ENCODE measurements at regions of chr21 and their contacts with region 1.

Region 1: DNA sequence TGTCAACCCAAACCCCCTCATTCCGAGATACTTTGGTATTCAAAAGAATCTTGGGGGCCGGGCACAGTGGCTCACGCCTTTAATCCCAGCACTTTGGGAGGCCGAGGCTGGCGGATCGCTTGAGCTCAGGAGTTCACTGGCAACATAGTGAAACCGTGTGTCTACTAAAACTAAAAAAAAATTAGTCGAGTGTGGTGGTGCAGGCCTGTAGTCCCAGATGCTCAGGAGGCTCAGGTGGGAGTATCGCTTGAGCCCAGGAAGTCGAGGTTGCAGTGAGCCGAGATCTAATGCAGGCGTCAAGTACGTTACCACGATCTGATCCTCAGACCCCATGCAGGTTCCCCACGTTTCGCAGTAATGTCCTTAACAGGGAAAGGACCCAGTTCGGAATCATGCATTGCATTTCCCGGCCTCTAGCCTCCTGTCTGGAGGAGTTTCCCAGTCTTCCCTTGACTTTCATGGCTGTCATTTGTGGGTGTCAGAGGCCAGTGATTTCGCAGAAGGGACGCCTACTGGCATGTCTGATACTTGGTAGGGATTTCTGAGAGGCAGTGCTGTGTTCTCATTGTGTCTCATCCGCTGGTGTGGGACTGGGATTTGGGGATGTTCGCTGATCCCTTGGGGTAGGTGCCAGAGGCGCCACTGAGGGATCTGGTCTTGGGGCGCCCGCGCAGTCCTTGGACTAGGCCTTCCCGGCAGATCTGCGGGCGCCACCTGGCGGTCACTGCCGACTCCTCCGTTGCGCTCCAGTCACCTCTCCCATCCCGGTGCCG is 39.3 kb upstream of the HMGN1 start:
- DNase-seq: peak; percentile 84
- ATAC-seq: peak; percentile 82
- H3K4me3 Mint-ChIP-seq: peak overlapping the region; percentile 82
- H3K27ac Mint-ChIP-seq: peak overlapping the region; percentile 75
- H3K4me1 Mint-ChIP-seq: peaks cover 26% of the 10 kb centered on the region
- H3K27me3 Mint-ChIP-seq: no peaks in the 10 kb centered on the region
- CTCF ChIP-seq: peak; percentile 88

Region 2: DNA sequence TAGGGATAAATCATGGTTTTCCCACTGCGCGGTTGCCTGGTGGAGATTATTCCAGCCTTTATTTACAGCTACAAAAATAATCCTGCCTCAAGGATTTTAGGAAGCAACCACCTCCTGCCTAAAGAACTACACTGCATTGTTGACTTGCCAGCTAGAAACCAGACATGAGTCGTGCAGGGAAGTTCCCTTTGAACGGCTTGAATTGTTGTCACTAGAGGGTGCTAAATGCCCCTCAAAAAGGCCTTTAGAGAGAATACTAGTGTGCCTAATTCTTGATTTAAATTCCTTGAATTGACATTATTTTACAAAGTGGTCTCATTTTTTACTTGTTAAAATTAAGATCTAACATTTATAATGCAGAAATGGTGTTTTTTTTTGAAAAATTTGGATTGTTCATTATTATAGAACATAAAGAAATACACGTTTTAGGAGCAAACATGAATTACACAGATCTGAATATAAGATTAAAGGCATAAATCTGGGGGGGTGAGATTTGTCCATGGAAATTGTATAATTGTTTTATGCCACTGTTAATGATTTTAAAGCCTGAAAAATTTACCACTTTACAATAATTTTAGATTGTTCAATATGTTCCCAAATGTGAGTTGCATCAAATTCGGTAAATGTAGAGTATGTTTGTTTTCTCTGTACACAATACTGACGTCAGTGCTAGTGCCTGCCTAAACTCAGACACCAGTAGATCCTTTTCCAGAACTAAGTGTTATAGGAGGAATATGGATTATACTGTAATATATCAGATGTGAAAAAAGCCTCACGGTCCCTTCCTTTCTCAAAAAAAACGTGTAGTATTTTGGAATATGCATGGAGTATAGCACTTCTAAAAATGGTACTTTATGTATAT is 882.3 kb before region 1 on chr21:
- CTCF ChIA-PET with region 1: no interaction called
- POLR2A ChIA-PET with region 1: no interaction called
- intact Hi-C with region 1: loop called (anchors 5 kb)
- DNase-seq: no peak
- ATAC-seq: no peak
- H3K4me3 Mint-ChIP-seq: no peak overlapping the region
- H3K27ac Mint-ChIP-seq: no peak overlapping the region
- H3K4me1 Mint-ChIP-seq: no peaks in the 10 kb centered on the region
- H3K27me3 Mint-ChIP-seq: peaks cover 14% of the 10 kb centered on the region
- CTCF ChIP-seq: no peak

Region 3: GRCh38 chr21:39183237-39184007 is 204.8 kb before region 1 on chr21 and contains the start of gene PSMG1:
- CTCF ChIA-PET with region 1: no interaction called
- POLR2A ChIA-PET with region 1: interaction called, 10 read pairs
- intact Hi-C with region 1: loop called (anchors 1 kb)
- DNase-seq: peak; percentile 97
- ATAC-seq: peak; percentile 91
- H3K4me3 Mint-ChIP-seq: peak within 1 kb of the TSS; percentile 98
- H3K27ac Mint-ChIP-seq: peak within 1 kb of the TSS; percentile 94
- H3K4me1 Mint-ChIP-seq: peaks cover 20% of the 10 kb centered on the region
- H3K27me3 Mint-ChIP-seq: no peaks in the 10 kb centered on the region
- CTCF ChIP-seq: no peak
- total RNA-seq, gene PSMG1: 23.7 and 28.4 TPM in 2 replicates

Region 4: GRCh38 chr21:39313571-39314142 is 74.6 kb before region 1 on chr21 and contains the start of gene BRWD1:
- CTCF ChIA-PET with region 1: interaction called, 5 read pairs
- POLR2A ChIA-PET with region 1: interaction called, 19 read pairs
- intact Hi-C with region 1: loop called (anchors 1 kb)
- DNase-seq: peak; percentile 86
- ATAC-seq: peak; percentile 49
- H3K4me3 Mint-ChIP-seq: peak within 1 kb of the TSS; percentile 94
- H3K27ac Mint-ChIP-seq: peak within 1 kb of the TSS; percentile 92
- H3K4me1 Mint-ChIP-seq: peaks cover 47% of the 10 kb centered on the region
- H3K27me3 Mint-ChIP-seq: no peaks in the 10 kb centered on the region
- CTCF ChIP-seq: no peak
- total RNA-seq, gene BRWD1: 36.9 and 40.3 TPM in 2 replicates

Region 5: GRCh38 chr21:39373644-39374043 is 14.6 kb before region 1 on chr21:
- CTCF ChIA-PET with region 1: interaction called, 11 read pairs
- POLR2A ChIA-PET with region 1: interaction called, 3 read pairs
- intact Hi-C with region 1: loop called (anchors 1 kb)
- DNase-seq: no peak
- ATAC-seq: peak; percentile 49
- H3K4me3 Mint-ChIP-seq: no peak overlapping the region
- H3K27ac Mint-ChIP-seq: no peak overlapping the region
- H3K4me1 Mint-ChIP-seq: peaks cover 5% of the 10 kb centered on the region
- H3K27me3 Mint-ChIP-seq: no peaks in the 10 kb centered on the region
- CTCF ChIP-seq: no peak

Region 6: DNA sequence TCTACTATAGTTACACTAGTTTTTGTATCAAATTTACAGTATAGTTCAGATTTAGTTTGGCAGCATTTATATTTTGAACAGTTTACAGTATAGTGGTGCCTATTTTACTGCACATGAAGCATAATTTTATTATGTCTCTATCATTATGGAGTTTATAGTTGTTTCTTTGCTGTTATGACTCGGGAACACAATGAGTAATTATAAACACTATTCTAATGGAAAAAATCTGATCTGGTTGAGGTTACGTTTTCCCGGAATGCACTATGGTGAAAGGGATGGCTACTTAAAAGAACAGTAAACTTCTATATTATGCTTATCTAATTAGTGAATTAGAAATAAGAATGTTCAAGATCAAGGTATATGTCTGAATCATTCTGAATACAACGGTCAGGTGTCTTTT is 46.7 kb after region 1 on chr21:
- CTCF ChIA-PET with region 1: no interaction called
- POLR2A ChIA-PET with region 1: no interaction called
- intact Hi-C with region 1: no loop called
- DNase-seq: no peak
- ATAC-seq: no peak
- H3K4me3 Mint-ChIP-seq: no peak overlapping the region
- H3K27ac Mint-ChIP-seq: no peak overlapping the region
- H3K4me1 Mint-ChIP-seq: no peaks in the 10 kb centered on the region
- H3K27me3 Mint-ChIP-seq: peaks cover 28% of the 10 kb centered on the region
- CTCF ChIP-seq: no peak

Region 7: GRCh38 chr21:39451332-39452206 is 63.3 kb after region 1 on chr21 and contains the start of gene SH3BGR:
- CTCF ChIA-PET with region 1: no interaction called
- POLR2A ChIA-PET with region 1: no interaction called
- intact Hi-C with region 1: no loop called
- DNase-seq: no peak
- ATAC-seq: no peak
- H3K4me3 Mint-ChIP-seq: no peak within 1 kb of the TSS
- H3K27ac Mint-ChIP-seq: no peak within 1 kb of the TSS
- H3K4me1 Mint-ChIP-seq: no peaks in the 10 kb centered on the region
- H3K27me3 Mint-ChIP-seq: peaks cover 8% of the 10 kb centered on the region
- CTCF ChIP-seq: no peak
- total RNA-seq, gene SH3BGR: 0.33 and 1.2 TPM in 2 replicates

Region 8: GRCh38 chr21:39479142-39479813 is 91.1 kb after region 1 on chr21:
- CTCF ChIA-PET with region 1: no interaction called
- POLR2A ChIA-PET with region 1: no interaction called
- intact Hi-C with region 1: no loop called
- DNase-seq: no peak
- ATAC-seq: no peak
- H3K4me3 Mint-ChIP-seq: no peak overlapping the region
- H3K27ac Mint-ChIP-seq: no peak overlapping the region
- H3K4me1 Mint-ChIP-seq: no peaks in the 10 kb centered on the region
- H3K27me3 Mint-ChIP-seq: no peaks in the 10 kb centered on the region
- CTCF ChIP-seq: no peak

Measured in activated B cell treated with CpG ODN at 0.5 μM for 24 hours (primary cell).